Activated CD8-positive, alpha-beta T cell treated with anti-CD3 and anti-CD28 coated beads for 36 hours (primary cell): ENCODE measurements at regions of chr2 and their contacts with region 1.

Region 1: GRCh38 chr2:96138179-96139145 is at the start of gene ASTL:
- DNase-seq: peak; percentile 80
- ATAC-seq: peak; percentile 48
- H3K4me3 Mint-ChIP-seq: peak within 1 kb of the TSS; percentile 7
- H3K27ac Mint-ChIP-seq: peak within 1 kb of the TSS; percentile 55
- H3K4me1 Mint-ChIP-seq: peaks cover 29% of the 10 kb centered on the region
- H3K27me3 Mint-ChIP-seq: no peaks in the 10 kb centered on the region
- CTCF ChIP-seq: peak; percentile 71
- total RNA-seq, gene ASTL: 1.8 to 2.7 TPM

Region 2: GRCh38 chr2:96072746-96073145 is 65.7 kb before region 1 on chr2:
- CTCF ChIA-PET with region 1: no interaction called
- POLR2A ChIA-PET with region 1: no interaction called
- intact Hi-C with region 1: no loop called
- DNase-seq: no peak
- ATAC-seq: no peak
- H3K4me3 Mint-ChIP-seq: no peak overlapping the region
- H3K27ac Mint-ChIP-seq: no peak overlapping the region
- H3K4me1 Mint-ChIP-seq: no peaks in the 10 kb centered on the region
- H3K27me3 Mint-ChIP-seq: no peaks in the 10 kb centered on the region
- CTCF ChIP-seq: no peak

Region 3: DNA sequence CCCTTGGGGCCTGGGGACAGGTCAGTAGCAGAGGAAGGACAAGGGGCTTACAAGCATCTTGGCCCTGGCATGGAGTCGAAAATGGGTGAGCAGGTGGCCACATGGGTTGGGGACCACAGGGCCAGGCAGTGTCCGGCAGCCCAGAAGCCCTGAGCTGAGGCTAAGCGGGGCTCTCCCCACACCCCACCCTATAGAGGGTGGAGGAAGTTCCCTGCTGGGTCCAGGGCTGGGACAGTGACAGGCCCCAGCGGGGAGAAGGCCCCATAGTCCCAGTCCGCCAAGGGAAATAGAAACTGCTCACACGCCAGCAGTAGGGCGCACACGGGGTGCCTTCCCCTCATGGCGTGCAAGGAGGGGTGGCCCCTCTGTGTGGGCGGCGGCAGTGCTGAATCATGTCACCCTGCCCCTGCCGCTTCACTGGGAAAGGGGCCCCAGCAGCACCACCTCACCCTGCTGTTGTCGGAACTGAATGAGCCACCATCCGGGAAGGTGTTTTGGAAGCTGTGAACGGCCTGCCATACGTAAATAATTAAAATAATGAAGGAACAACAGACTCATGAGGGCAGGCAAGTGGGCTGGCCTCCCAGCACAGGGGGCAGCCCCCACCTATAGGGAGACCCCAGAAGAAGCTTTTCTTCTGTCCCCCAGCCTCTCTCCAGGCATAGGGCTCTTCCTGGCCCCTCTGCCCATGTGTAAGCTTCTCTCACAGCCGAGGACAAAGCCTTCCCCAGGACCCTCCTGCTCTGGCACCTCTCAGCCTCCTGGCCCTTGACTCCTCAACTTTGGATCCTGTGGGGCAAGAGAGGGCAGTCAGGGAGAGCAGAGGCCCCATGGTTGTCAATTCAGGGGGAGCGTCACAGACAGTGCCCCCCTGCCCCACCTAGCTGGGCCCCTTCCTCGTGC is 19.4 kb after region 1 on chr2:
- CTCF ChIA-PET with region 1: interaction called, 19 read pairs
- POLR2A ChIA-PET with region 1: interaction called, 690 read pairs
- intact Hi-C with region 1: no loop called
- DNase-seq: peak; percentile 99
- ATAC-seq: peak; percentile 73
- H3K4me3 Mint-ChIP-seq: peak overlapping the region; percentile 42
- H3K27ac Mint-ChIP-seq: peak overlapping the region; percentile 93
- H3K4me1 Mint-ChIP-seq: peaks cover 92% of the 10 kb centered on the region
- H3K27me3 Mint-ChIP-seq: no peaks in the 10 kb centered on the region
- CTCF ChIP-seq: no peak

Region 4: GRCh38 chr2:96164459-96165184 is 26.2 kb after region 1 on chr2:
- CTCF ChIA-PET with region 1: interaction called, 540 read pairs
- POLR2A ChIA-PET with region 1: interaction called, 690 read pairs
- intact Hi-C with region 1: no loop called
- DNase-seq: peak; percentile 92
- ATAC-seq: peak; percentile 76
- H3K4me3 Mint-ChIP-seq: peak overlapping the region; percentile 81
- H3K27ac Mint-ChIP-seq: peak overlapping the region; percentile 99
- H3K4me1 Mint-ChIP-seq: peaks cover 75% of the 10 kb centered on the region
- H3K27me3 Mint-ChIP-seq: no peaks in the 10 kb centered on the region
- CTCF ChIP-seq: no peak

Region 5: GRCh38 chr2:96180521-96180920 is 42.1 kb after region 1 on chr2:
- CTCF ChIA-PET with region 1: interaction called, 540 read pairs
- POLR2A ChIA-PET with region 1: interaction called, 109 read pairs
- intact Hi-C with region 1: no loop called
- DNase-seq: no peak
- ATAC-seq: peak; percentile 45
- H3K4me3 Mint-ChIP-seq: no peak overlapping the region
- H3K27ac Mint-ChIP-seq: no peak overlapping the region
- H3K4me1 Mint-ChIP-seq: peaks cover 12% of the 10 kb centered on the region
- H3K27me3 Mint-ChIP-seq: no peaks in the 10 kb centered on the region
- CTCF ChIP-seq: no peak

Region 6: DNA sequence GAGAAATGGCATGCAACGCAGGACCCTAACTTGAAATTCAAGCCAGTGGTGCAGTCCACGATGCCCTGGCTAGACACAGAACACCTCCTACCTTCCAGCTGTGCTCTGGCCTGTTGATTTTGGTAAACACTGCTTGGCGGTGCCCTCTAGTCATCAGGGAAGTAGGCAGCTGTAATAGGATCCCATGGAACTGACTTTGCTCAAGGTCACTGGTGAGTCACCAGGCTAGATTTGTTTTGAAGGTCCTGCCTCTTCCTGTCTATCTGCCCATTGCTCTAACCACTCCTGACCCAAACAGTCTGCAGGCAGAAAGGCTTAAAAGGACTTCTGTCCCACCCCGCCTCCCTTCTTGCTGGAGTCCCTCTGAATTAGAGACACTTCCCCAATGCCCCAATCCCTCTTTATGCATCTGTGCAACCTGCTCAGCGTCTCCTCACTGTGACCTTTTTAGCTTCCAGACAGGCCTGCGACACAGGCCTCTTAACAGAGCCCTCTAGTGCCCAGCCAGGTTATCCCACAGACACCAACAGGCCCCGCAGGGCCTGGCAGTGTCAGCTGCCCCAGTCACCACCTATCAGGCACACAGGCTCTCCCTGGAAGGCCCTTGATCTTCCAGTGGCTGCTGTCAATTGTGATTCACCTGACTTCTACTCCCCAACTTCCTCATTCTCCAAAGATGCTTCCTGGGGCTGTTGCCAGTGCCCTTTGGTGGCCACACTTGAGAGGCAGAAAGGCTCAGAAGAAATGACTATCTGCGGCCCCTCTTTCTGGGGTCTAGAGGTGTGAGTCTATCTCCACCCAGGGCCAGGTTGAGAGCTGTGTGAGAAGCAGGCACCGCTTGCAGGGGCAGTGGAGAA is 122.2 kb after region 1 on chr2:
- CTCF ChIA-PET with region 1: interaction called, 15 read pairs
- POLR2A ChIA-PET with region 1: interaction called, 6 read pairs
- intact Hi-C with region 1: loop called (anchors 5 kb)
- DNase-seq: peak; percentile 61
- ATAC-seq: peak; percentile 66
- H3K4me3 Mint-ChIP-seq: no peak overlapping the region
- H3K27ac Mint-ChIP-seq: peak overlapping the region; percentile 81
- H3K4me1 Mint-ChIP-seq: peaks cover 69% of the 10 kb centered on the region
- H3K27me3 Mint-ChIP-seq: no peaks in the 10 kb centered on the region
- CTCF ChIP-seq: no peak

Region 7: DNA sequence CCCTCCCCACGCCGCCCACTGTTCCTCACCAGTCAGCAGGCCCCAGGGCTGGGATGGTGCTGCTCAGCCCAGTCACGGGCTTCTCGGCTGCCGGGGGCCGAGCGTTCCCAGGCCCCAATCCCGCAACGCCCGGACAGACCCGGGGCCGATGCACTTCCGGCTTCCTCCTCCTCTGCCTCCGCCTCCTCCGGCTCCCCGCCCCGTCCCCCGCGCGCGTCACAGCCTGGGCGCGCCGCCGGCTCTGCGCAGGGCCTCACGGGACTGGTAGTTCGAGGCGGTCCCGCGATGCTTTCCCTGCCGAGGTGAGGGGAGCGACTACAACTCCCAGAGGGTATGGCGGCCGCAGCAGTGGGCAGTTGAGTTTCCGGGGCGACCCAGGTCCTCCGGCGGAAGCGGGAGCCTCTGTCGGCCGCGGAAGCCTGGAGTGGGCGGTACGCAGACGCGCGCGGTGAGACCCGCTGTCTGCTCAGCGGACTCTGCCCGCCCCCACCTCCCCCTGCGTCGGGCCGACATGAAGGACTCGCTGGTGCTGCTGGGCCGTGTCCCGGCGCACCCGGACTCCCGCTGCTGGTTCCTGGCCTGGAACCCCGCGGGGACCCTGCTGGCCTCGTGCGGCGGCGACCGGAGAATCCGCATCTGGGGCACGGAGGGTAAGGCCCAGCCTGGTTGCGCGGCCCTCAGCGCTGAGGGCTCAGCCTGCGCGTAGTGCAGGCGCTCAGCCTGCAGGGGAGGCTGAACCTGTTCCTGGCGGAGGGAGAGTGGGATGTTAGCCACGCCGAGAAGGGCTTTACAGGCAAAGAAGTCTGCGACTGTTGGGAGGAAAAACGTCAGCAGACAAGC is 127.6 kb after region 1 on chr2 and contains the starts of genes CIAO1 and TMEM127:
- CTCF ChIA-PET with region 1: interaction called, 15 read pairs
- POLR2A ChIA-PET with region 1: interaction called, 28 read pairs
- intact Hi-C with region 1: loop called (anchors 5 kb)
- DNase-seq: peak; percentile 99
- ATAC-seq: peak; percentile 95
- H3K4me3 Mint-ChIP-seq: peak within 1 kb of the TSS; percentile 85
- H3K27ac Mint-ChIP-seq: peak within 1 kb of the TSS; percentile 94
- H3K4me1 Mint-ChIP-seq: peaks cover 45% of the 10 kb centered on the region
- H3K27me3 Mint-ChIP-seq: no peaks in the 10 kb centered on the region
- CTCF ChIP-seq: peak; percentile 18
- total RNA-seq, gene CIAO1: 72.1 to 72.3 TPM
- total RNA-seq, gene TMEM127: 13.1 to 15.0 TPM

Region 8: GRCh38 chr2:96565111-96565510 is 426.6 kb after region 1 on chr2:
- CTCF ChIA-PET with region 1: no interaction called
- POLR2A ChIA-PET with region 1: no interaction called
- intact Hi-C with region 1: no loop called
- DNase-seq: no peak
- ATAC-seq: no peak
- H3K4me3 Mint-ChIP-seq: no peak overlapping the region
- H3K27ac Mint-ChIP-seq: no peak overlapping the region
- H3K4me1 Mint-ChIP-seq: no peaks in the 10 kb centered on the region
- H3K27me3 Mint-ChIP-seq: no peaks in the 10 kb centered on the region
- CTCF ChIP-seq: no peak